HEK293T (cell line): ENCODE measurements at regions of chr21 and their contacts with region 1.

Region 1: DNA sequence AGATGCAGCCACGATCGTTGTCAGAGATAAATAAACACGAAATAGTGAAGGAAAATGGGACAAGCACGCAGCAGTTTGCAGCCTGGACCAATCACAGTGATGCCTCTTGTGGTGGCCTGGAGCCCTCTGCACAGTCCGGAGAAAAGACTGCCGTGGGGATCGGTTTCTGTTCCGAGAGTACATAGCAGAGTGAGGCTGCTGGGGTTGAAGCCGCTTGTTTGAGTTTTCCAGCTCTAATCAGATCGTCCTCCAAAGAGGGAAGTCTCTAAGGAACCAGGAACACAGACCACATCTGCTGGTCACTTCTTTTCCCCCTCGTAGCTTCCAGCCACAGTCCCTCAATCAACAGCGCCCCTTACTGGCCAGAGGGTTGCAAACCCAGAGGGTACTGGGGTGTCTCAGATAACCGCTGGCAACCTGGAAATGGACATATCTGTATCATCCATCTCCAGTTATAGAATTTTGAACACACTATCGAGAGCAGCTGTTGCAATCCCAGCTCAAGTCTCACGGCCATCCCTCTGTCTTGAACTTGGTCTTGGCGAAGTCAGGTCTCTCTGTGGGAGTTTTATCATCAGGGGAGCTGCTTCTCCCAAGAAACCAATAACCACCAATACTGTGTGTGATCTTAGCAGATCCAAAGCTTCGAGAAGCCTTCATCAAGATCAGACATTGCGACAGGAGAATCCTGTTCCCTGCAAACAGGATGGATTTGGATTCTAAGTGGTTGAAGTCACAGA is 57.4 kb downstream of the OLIG1 start:
- DNase-seq: peak; percentile 82

Region 2: DNA sequence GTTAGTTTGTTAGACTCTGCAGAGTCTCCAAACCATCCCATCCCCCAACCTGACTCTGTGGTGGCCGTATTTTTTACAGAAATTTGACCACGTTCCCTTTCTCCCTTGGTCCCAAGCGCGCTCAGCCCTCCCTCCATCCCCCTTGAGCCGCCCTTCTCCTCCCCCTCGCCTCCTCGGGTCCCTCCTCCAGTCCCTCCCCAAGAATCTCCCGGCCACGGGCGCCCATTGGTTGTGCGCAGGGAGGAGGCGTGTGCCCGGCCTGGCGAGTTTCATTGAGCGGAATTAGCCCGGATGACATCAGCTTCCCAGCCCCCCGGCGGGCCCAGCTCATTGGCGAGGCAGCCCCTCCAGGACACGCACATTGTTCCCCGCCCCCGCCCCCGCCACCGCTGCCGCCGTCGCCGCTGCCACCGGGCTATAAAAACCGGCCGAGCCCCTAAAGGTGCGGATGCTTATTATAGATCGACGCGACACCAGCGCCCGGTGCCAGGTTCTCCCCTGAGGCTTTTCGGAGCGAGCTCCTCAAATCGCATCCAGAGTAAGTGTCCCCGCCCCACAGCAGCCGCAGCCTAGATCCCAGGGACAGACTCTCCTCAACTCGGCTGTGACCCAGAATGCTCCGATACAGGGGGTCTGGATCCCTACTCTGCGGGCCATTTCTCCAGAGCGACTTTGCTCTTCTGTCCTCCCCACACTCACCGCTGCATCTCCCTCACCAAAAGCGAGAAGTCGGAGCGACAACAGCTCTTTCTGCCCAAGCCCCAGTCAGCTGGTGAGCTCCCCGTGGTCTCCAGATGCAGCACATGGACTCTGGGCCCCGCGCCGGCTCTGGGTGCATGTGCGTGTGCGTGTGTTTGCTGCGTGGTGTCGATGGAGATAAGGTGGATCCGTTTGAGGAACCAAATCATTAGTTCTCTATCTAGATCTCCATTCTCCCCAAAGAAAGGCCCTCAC is 101.6 kb before region 1 on chr21 and contains the start of gene OLIG2:
- CTCF ChIA-PET with region 1: interaction called, 8 read pairs
- POLR2A ChIA-PET with region 1: interaction called, 13 read pairs
- DNase-seq: peak; percentile 97